ENCODE measurements at regions of chr17 and their contacts with region 1.

Region 1: DNA sequence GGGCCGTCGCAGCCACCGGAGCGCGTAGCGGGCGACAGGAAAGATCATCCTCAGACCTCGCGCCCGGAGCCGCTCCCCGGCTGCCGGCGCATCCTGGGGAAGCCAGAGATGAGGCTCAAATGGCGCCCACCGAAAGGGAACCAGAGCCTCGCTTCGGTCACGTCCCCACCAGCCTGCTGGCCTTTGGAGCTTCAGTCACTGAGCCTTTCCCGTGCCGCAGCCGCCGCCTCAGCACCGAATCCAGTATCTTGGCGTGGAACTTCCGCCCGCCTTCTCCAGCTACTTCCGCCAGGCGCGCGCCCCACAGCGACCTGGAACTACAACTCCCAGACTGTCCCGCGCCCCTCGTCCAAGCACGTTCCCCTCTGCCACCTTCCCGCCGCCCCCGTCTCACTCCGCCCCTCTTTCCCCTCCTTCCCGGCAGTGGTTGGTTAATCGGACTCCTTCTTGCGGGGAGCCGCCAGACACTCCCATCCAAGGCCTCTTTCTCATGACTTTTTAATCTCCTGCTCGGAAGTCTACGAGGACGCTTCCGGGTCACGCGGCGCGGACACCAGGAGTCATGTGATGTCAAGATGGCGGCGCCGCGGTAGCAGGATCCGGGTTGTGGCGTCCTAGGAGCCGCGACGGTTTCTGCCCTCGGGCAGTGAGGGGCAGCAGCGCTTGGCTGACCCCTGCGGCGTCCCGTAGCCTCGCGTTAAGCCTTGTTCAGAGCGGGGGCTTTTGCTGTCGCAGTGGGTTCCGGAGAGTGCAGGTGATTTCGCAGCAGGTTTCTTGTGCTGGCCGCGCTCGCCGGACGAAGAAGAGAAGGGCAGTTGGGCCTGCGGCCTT is at the starts of genes SMCR8 and TOP3A:
- DNase-seq: peak; percentile 92
- H3K4me3 ChIP-seq: peak within 1 kb of the TSS; percentile 92
- H3K27ac ChIP-seq: peak within 1 kb of the TSS; percentile 76
- H3K4me1 ChIP-seq: peaks cover 42% of the 10 kb centered on the region
- CTCF ChIP-seq: no peak
- total RNA-seq, gene SMCR8: 11.1 and 11.8 TPM in 2 replicates
- total RNA-seq, gene TOP3A: 48.3 and 48.5 TPM in 2 replicates

Region 2: DNA sequence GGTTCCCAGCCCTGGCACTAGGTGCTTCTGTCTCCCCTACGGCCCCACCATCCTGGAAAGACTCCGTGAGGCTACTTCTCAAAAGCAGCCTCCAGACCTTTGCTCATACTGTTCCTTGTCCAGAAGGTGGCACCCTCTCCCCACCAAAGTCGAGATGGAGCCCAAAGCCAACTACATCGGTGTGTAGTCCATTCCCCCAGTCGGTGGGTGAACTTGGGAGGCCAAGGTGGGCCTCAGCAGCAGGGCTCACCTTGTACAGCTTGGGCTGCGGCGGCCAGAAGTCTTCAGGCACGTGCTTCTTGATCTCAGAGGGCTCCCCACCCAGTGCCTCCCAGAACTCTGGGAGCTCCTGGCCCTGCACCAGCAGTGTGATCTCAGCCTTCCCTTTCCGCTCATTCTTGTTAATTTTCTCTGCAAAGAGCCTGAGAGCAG is 66.6 kb before region 1 on chr17:
- CTCF ChIA-PET with region 1: no interaction called
- POLR2A ChIA-PET with region 1: no interaction called
- intact Hi-C with region 1: loop called (anchors 5 kb)
- DNase-seq: peak; percentile 81
- H3K4me3 ChIP-seq: no peak overlapping the region
- H3K27ac ChIP-seq: no peak overlapping the region
- H3K4me1 ChIP-seq: no peaks in the 10 kb centered on the region
- CTCF ChIP-seq: peak; percentile 89

Region 3: DNA sequence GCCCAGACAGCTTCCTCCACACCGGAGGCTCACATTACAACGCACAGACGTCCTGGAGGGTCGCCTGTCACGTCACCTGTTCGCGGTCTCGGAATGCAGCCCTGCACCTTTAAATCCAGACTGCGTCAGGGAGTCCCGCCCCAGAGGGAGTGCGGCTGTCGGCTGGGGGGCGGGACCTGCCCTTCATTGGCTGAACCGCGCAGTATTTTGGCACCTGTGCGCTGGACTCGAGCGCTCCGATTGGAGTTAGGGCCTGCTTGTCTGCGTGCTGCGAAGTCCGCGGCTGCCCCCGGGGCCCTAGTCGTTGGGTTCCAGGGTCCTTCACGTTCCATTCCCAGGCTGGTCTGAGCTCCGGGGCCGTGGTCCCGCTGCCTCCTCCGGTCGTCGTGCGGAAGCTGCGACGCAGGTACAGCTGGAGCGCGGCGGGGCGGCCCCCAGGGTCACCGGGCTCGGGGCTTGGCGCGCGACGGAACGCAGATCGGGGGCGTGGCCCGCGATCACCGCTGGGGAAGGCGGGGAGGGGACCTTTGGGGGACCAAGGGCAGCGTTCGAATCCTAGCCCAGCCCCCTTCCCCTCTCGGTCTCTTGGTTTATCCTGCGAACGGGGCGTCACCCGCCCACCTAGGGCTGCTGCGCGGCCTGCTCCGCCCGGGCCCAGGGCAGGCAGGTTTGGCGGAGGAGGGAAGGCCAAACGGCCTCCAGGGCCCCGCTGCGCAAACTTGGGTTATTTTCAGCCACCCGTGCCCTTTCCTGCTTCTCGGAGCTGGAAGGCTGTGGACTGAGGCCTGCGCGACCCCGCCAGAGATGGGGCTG is 54.4 kb before region 1 on chr17 and contains the start of gene MIEF2:
- CTCF ChIA-PET with region 1: no interaction called
- POLR2A ChIA-PET with region 1: no interaction called
- intact Hi-C with region 1: loop called (anchors 2 kb)
- DNase-seq: peak; percentile 96
- H3K4me3 ChIP-seq: peak within 1 kb of the TSS; percentile 80
- H3K27ac ChIP-seq: peak within 1 kb of the TSS; percentile 49
- H3K4me1 ChIP-seq: peaks cover 33% of the 10 kb centered on the region
- CTCF ChIP-seq: no peak
- total RNA-seq, gene MIEF2: 7.6 and 7.9 TPM in 2 replicates

Measured in OCI-LY7 (cell line).